Heart left ventricle (tissue), 16 donors: ENCODE measurements at regions of chr4 and their contacts with region 1.

Region 1: GRCh38 chr4:2852481-2852921 is 8.9 kb downstream of the ADD1 start:
- DNase-seq: peak in 4 of 5 donors; percentile 65 to 80 (median 70)
- ATAC-seq: peak; percentile 79 to 94 (median 90)
- H3K4me3 ChIP-seq: peak overlapping the region in 2 of 12 donors; percentile 12 to 20
- H3K27ac ChIP-seq: peak overlapping the region; percentile 12 to 75 (median 60)
- H3K4me1 ChIP-seq: peaks cover 17 to 89% (median 77%) of the 10 kb centered on the region in 12 donors
- H3K27me3 ChIP-seq: no peaks in the 10 kb centered on the region
- CTCF ChIP-seq: no peak
- POLR2A ChIP-seq: no peak

Region 2: GRCh38 chr4:2800691-2801596 is 51.6 kb before region 1 on chr4:
- intact Hi-C with region 1: loop called in 1 of 10 experiments (anchors 5 kb)
- DNase-seq: peak; percentile 81 to 93 (median 89)
- ATAC-seq: peak; percentile 72 to 81 (median 74)
- H3K4me3 ChIP-seq: peak overlapping the region in 9 of 12 donors; percentile 12 to 60 (median 33)
- H3K27ac ChIP-seq: peak overlapping the region; percentile 76 to 96 (median 88)
- H3K4me1 ChIP-seq: peaks cover 55 to 98% (median 92%) of the 10 kb centered on the region in 12 donors
- H3K27me3 ChIP-seq: no peaks in the 10 kb centered on the region
- CTCF ChIP-seq: no peak
- POLR2A ChIP-seq: peak in 1 of 2 donors; percentile 36

Region 3: GRCh38 chr4:2817701-2818350 is 34.7 kb before region 1 on chr4:
- intact Hi-C with region 1: no loop called
- DNase-seq: peak in 2 of 5 donors; percentile 35 to 67
- ATAC-seq: peak in 3 of 4 donors; percentile 26 to 62 (median 30)
- H3K4me3 ChIP-seq: peak overlapping the region in 10 of 12 donors; percentile 49 to 68 (median 59)
- H3K27ac ChIP-seq: peak overlapping the region in 6 of 12 donors; percentile 11 to 64 (median 21)
- H3K4me1 ChIP-seq: peaks cover 0 to 64% (median 14%) of the 10 kb centered on the region in 12 donors
- H3K27me3 ChIP-seq: no peaks in the 10 kb centered on the region
- CTCF ChIP-seq: no peak
- POLR2A ChIP-seq: no peak

Region 4: GRCh38 chr4:2867758-2868491 is 15.4 kb after region 1 on chr4:
- intact Hi-C with region 1: loop called in 1 of 10 experiments (anchors 2 kb)
- DNase-seq: peak in 2 of 5 donors; percentile 25 to 53
- ATAC-seq: peak; percentile 66 to 81 (median 68)
- H3K4me3 ChIP-seq: peak overlapping the region in 10 of 12 donors; percentile 15 to 50 (median 38)
- H3K27ac ChIP-seq: peak overlapping the region; percentile 42 to 83 (median 70)
- H3K4me1 ChIP-seq: peaks cover 41 to 100% (median 97%) of the 10 kb centered on the region in 12 donors
- H3K27me3 ChIP-seq: no peaks in the 10 kb centered on the region
- CTCF ChIP-seq: no peak
- POLR2A ChIP-seq: no peak

Region 5: DNA sequence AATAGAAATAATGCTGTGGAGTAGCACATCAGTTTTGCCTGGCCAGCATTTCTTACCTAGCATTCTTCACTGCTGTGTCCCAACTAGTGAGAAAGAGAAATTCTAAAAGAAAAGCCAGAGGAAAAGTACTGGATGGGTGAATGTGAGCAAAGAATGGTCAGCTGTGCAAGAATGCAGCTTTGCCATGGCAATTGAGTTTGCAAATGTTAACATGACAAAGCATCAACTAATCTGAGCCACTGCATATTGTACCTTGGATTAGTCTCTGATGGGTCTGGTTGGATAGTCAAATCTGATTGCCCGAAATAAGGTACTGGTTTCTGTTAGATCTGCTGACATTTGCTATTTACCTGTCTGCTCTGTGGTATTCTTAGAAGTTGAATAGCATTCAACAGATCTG is 29.8 kb after region 1 on chr4:
- intact Hi-C with region 1: loop called in 2 of 10 experiments (anchors 5 kb)
- DNase-seq: no peak
- ATAC-seq: no peak
- H3K4me3 ChIP-seq: no peak overlapping the region
- H3K27ac ChIP-seq: peak overlapping the region in 2 of 12 donors; percentile 4 to 7
- H3K4me1 ChIP-seq: peaks cover 0 to 41% (median 14%) of the 10 kb centered on the region in 12 donors
- H3K27me3 ChIP-seq: no peaks in the 10 kb centered on the region
- CTCF ChIP-seq: no peak
- POLR2A ChIP-seq: no peak

Region 6: GRCh38 chr4:2891294-2891693 is 38.8 kb after region 1 on chr4:
- intact Hi-C with region 1: loop called in 1 of 10 experiments (anchors 5 kb)
- DNase-seq: no peak
- ATAC-seq: no peak
- H3K4me3 ChIP-seq: no peak overlapping the region
- H3K27ac ChIP-seq: peak overlapping the region in 1 of 12 donors; percentile 22
- H3K4me1 ChIP-seq: peaks cover 0 to 50% (median 27%) of the 10 kb centered on the region in 12 donors
- H3K27me3 ChIP-seq: no peaks in the 10 kb centered on the region
- CTCF ChIP-seq: no peak
- POLR2A ChIP-seq: no peak

Region 7: GRCh38 chr4:2991243-2991642 is 138.7 kb after region 1 on chr4:
- intact Hi-C with region 1: no loop called
- DNase-seq: no peak
- ATAC-seq: no peak
- H3K4me3 ChIP-seq: no peak overlapping the region
- H3K27ac ChIP-seq: no peak overlapping the region
- H3K4me1 ChIP-seq: no peaks in the 10 kb centered on the region
- H3K27me3 ChIP-seq: no peaks in the 10 kb centered on the region
- CTCF ChIP-seq: no peak
- POLR2A ChIP-seq: no peak